CD4-positive, alpha-beta memory T cell (primary cell): ENCODE measurements at regions of chr15 and their contacts with region 1.

Region 1: DNA sequence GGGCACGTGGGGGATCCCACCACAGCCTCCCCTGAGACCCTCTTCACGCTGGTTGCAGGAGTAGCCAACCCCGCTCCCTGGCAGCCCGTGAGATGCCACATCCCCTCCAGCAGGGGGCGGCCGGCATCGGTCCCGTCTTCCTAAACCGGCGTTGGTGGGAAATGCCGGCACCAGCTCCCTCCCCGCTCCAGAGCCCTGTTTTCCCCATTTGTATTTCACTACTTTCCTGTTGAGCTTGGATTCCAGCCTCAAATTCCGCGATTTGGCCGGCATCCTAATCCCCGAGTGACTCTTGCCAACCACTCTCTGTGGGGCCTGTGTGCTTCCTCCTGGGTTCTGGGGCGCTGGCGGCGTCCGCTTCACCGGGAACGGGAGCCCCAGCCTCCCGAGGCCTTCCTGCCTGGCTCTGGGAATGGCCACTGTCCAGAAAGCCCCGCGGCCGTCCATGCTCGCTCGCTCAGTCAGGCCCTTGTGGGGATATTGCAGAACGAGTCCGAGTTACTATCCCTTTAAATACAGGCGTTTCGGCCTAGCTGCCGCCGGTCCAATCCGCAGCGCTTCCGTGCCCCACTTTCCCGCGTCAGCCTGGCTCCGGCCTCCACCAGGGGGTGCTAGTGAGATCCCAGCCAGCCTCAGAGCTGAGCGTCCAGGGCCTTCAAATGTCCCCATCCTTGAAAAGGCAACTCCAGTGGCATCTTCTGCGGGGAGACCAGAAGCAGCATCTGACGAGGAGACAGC is 8.1 kb upstream of the ADAMTS17 start:
- DNase-seq: peak; percentile 82 to 87 (median 83)
- H3K4me3 ChIP-seq: peak overlapping the region; percentile 70 to 98
- H3K4me3 Mint-ChIP-seq: peak overlapping the region; percentile 95 to 97 (median 96)
- H3K27ac ChIP-seq: peak overlapping the region; percentile 85
- H3K27ac Mint-ChIP-seq: peak overlapping the region; percentile 81 to 98 (median 93)
- H3K4me1 ChIP-seq: peaks cover 5% of the 10 kb centered on the region
- H3K4me1 Mint-ChIP-seq: peaks cover 6 to 18% (median 10%) of the 10 kb centered on the region in 4 donors
- H3K27me3 ChIP-seq: peaks cover 7% of the 10 kb centered on the region
- H3K27me3 Mint-ChIP-seq: peaks cover 13 to 24% of the 10 kb centered on the region in 2 donors

Region 2: DNA sequence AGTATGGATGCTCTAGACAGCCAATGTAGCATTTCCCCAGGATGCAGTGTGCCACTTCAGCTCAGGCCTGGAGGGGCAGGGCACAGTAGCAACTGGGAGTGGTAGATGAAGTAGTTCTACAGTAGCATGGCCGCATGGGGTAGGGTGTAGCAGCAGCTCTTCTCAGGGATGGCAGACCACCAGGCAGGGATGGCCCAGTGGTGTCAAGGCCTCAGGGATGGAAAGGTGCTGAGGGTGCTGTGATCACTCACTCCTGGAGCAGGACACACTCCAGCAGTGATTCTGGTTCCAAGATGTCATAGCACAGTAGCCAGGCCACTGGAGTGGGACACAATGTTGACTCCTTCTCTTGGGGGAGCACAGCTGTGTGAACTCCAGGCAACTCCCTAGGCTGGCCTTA is 405.7 kb before region 1 on chr15:
- CTCF ChIA-PET with region 1: interaction called, 10 read pairs
- POLR2A ChIA-PET with region 1: no interaction called
- intact Hi-C with region 1: no loop called
- DNase-seq: no peak
- H3K4me3 ChIP-seq: no peak overlapping the region
- H3K4me3 Mint-ChIP-seq: no peak overlapping the region
- H3K27ac ChIP-seq: no peak overlapping the region
- H3K27ac Mint-ChIP-seq: no peak overlapping the region
- H3K4me1 ChIP-seq: no peaks in the 10 kb centered on the region
- H3K4me1 Mint-ChIP-seq: no peaks in the 10 kb centered on the region
- H3K27me3 ChIP-seq: no peaks in the 10 kb centered on the region
- H3K27me3 Mint-ChIP-seq: peaks cover 5 to 9% of the 10 kb centered on the region in 2 donors

Region 3: GRCh38 chr15:100189849-100190248 is 160.0 kb before region 1 on chr15:
- CTCF ChIA-PET with region 1: no interaction called
- POLR2A ChIA-PET with region 1: no interaction called
- intact Hi-C with region 1: no loop called
- DNase-seq: no peak
- H3K4me3 ChIP-seq: no peak overlapping the region
- H3K4me3 Mint-ChIP-seq: no peak overlapping the region
- H3K27ac ChIP-seq: no peak overlapping the region
- H3K27ac Mint-ChIP-seq: no peak overlapping the region
- H3K4me1 ChIP-seq: no peaks in the 10 kb centered on the region
- H3K4me1 Mint-ChIP-seq: no peaks in the 10 kb centered on the region
- H3K27me3 ChIP-seq: no peaks in the 10 kb centered on the region
- H3K27me3 Mint-ChIP-seq: no peaks in the 10 kb centered on the region

Region 4: DNA sequence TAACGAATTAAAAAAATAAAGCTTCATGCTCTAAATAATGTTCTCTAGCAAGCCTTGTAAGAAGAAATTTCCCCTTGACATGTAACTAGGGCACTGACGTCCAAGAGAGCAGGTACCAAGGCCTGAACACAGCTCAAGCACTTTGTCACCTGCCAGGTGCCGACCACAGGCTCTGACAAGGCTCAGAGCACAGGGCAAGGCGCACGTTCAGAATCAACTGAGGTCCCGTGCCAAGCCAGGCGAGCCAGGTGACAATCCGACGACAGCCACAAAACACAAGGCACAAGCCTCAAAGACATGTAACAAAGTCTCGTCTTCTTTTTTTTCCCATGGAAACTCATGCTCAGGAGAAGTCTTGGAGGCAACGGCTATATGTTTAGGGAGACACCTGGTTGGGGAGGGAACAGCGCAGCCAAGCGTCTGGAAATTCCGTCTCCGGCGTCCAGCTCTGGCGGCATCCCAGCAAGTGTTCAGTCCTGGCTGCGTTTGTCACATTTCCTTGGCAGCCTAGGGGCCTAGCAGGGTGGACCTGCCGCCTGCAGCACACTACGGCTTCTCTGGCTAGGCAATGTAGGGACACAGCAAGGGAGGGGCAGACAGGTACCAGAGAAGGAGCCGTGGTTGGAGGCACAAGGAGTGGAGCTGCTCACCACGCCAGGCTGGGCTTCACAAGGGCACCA is 84.7 kb before region 1 on chr15:
- CTCF ChIA-PET with region 1: no interaction called
- POLR2A ChIA-PET with region 1: no interaction called
- intact Hi-C with region 1: no loop called
- DNase-seq: no peak
- H3K4me3 ChIP-seq: no peak overlapping the region
- H3K4me3 Mint-ChIP-seq: no peak overlapping the region
- H3K27ac ChIP-seq: no peak overlapping the region
- H3K27ac Mint-ChIP-seq: no peak overlapping the region
- H3K4me1 ChIP-seq: no peaks in the 10 kb centered on the region
- H3K4me1 Mint-ChIP-seq: no peaks in the 10 kb centered on the region
- H3K27me3 ChIP-seq: no peaks in the 10 kb centered on the region
- H3K27me3 Mint-ChIP-seq: no peaks in the 10 kb centered on the region

Region 5: GRCh38 chr15:100383302-100384107 is 33.6 kb after region 1 on chr15:
- CTCF ChIA-PET with region 1: interaction called, 18 read pairs
- POLR2A ChIA-PET with region 1: interaction called, 4 read pairs
- intact Hi-C with region 1: loop called (anchors 1 kb)
- DNase-seq: peak in 4 of 5 donors; percentile 26 to 39 (median 31)
- H3K4me3 ChIP-seq: no peak overlapping the region
- H3K4me3 Mint-ChIP-seq: no peak overlapping the region
- H3K27ac ChIP-seq: no peak overlapping the region
- H3K27ac Mint-ChIP-seq: peak overlapping the region in 1 of 7 donors; percentile 61
- H3K4me1 ChIP-seq: no peaks in the 10 kb centered on the region
- H3K4me1 Mint-ChIP-seq: peaks cover 0 to 2% (median 0%) of the 10 kb centered on the region in 4 donors
- H3K27me3 ChIP-seq: no peaks in the 10 kb centered on the region
- H3K27me3 Mint-ChIP-seq: peaks cover 1 to 11% of the 10 kb centered on the region in 2 donors

Region 6: DNA sequence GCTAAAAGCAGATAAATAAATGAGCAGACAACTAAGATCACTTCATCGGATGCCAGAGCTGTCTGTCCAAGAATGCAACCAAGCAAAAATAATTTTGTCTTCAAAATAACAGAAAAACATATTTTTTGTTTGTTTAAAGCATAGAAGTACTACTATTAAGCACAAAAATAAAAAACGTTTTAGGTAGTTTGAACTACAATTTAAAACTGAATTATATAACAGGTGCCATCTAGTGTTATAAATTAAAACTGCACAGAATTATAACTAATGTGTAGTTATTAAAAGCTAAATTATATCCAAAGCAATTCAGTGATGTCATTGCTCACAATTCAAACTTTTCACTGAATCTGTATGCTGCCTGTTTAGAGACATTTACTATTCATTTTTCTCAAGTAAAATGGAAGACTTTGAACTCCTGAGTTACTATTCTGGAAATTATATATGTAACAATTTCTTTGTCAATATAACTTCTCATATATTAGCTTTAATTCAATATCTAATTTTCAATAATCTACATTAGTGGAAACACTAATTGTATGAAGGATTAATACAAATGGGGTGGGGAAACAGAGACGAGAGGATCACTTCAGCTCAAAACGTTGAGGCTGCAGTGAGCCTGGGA is 222.6 kb after region 1 on chr15:
- CTCF ChIA-PET with region 1: interaction called, 214 read pairs
- POLR2A ChIA-PET with region 1: interaction called, 14 read pairs
- intact Hi-C with region 1: loop called (anchors 1 kb)
- DNase-seq: peak in 4 of 5 donors; percentile 35 to 41 (median 36)
- H3K4me3 ChIP-seq: no peak overlapping the region
- H3K4me3 Mint-ChIP-seq: peak overlapping the region in 7 of 8 donors; percentile 77 to 88 (median 84)
- H3K27ac ChIP-seq: peak overlapping the region; percentile 37
- H3K27ac Mint-ChIP-seq: peak overlapping the region in 5 of 7 donors; percentile 81 to 95 (median 94)
- H3K4me1 ChIP-seq: peaks cover 31% of the 10 kb centered on the region
- H3K4me1 Mint-ChIP-seq: peaks cover 32 to 58% (median 42%) of the 10 kb centered on the region in 4 donors
- H3K27me3 ChIP-seq: no peaks in the 10 kb centered on the region
- H3K27me3 Mint-ChIP-seq: no peaks in the 10 kb centered on the region

Region 7: DNA sequence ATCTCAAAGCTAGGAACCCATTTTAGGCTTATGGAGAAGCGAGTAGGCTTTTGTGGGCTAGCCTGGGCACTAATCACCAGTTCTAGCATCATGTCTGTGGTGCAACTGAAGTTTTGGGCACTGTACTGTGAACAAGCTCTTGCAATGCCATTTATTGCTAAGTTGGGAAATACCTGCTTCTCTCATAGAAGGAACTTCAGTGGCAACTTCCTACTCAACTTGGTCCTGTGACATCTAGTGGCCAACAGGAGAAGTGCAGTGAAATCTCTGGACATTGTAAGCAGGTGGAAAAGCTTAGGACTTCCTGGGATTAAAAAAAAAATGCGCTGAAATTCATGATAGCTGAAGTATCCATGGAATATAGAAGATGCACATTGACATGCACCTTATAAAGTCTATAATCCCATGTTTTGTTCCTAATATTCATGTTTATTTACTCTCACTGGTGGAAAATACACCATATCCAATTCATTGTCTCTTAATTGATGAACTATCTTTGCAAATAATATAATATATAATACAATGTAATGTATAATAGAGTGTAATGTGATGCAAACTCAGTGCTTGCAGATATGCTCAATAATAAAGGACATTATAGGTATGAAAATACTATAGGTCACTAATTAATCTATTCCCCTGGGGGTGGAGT is 523.3 kb after region 1 on chr15:
- CTCF ChIA-PET with region 1: interaction called, 14 read pairs
- POLR2A ChIA-PET with region 1: no interaction called
- intact Hi-C with region 1: loop called (anchors 1 kb)
- DNase-seq: peak; percentile 39 to 52 (median 51)
- H3K4me3 ChIP-seq: no peak overlapping the region
- H3K4me3 Mint-ChIP-seq: no peak overlapping the region
- H3K27ac ChIP-seq: no peak overlapping the region
- H3K27ac Mint-ChIP-seq: no peak overlapping the region
- H3K4me1 ChIP-seq: no peaks in the 10 kb centered on the region
- H3K4me1 Mint-ChIP-seq: peaks cover 0 to 1% (median under 1%) of the 10 kb centered on the region in 4 donors
- H3K27me3 ChIP-seq: no peaks in the 10 kb centered on the region
- H3K27me3 Mint-ChIP-seq: peaks cover 9 to 21% of the 10 kb centered on the region in 2 donors